ENCODE measurements at regions of chr12 and their contacts with region 1.

Region 1: DNA sequence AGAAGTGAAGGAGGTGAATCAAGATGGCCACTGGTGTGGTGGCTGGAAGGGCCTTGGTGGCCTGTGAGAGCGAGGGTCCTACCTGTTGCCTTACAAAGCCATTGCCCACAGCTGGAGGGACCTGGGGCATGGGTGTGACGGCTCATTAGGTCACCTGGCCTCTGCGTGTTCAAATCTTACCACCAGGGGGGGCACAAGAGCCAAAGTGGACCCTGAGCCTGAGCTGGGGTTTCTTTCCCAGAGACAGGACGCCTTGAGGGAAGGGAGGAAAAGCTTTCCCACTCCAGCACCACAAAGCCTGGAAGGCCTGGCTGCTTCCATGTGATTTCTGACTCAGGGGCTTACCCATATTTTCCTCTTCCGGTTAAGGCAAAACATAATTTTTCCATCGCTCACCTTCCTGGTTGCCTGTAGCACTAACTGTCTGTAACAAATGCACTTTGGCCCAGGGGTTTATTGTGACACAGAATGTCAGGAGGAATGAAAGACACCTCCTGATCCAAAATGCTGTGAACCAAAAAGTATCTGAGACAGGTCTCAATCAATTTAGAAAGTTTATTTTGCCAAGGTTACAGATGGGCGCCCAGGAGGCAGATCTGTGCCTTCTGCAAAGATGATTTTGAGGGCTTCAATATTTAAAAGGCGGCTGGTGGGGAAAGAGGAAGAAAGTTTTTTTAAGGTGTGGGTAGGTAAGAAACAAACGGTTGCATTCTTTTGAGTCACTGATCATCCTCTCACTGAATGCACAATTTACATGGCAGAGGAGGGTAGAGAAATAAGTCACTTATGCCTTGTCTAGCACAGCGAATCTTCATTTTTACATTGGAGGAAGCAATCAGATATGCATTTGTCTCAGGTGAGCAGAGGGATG is 4.3 kb upstream of the CD9 start:
- DNase-seq: peak; percentile 48 to 89 (median 82)
- H3K4me3 ChIP-seq: no peak overlapping the region
- H3K27ac ChIP-seq: peak overlapping the region in 47 of 59 donors; percentile 1 to 83 (median 52)
- H3K27me3 ChIP-seq: peaks cover 0 to 9% (median 0%) of the 10 kb centered on the region in 45 donors
- CTCF ChIP-seq: peak; percentile 91 to 98 (median 96)

Region 2: GRCh38 chr12:6062757-6063735 is 132.9 kb before region 1 on chr12:
- intact Hi-C with region 1: loop called in 1 of 2 experiments (anchors 5 kb)
- DNase-seq: peak in 8 of 10 donors; percentile 46 to 78 (median 62)
- H3K4me3 ChIP-seq: peak overlapping the region in 6 of 59 donors; percentile 7 to 41 (median 28)
- H3K27ac ChIP-seq: peak overlapping the region in 57 of 59 donors; percentile 2 to 90 (median 72)
- H3K27me3 ChIP-seq: no peaks in the 10 kb centered on the region
- CTCF ChIP-seq: peak; percentile 66 to 96 (median 90)

Region 3: GRCh38 chr12:6230321-6231110 is 34.6 kb after region 1 on chr12:
- intact Hi-C with region 1: loop called (anchors 1 to 2 kb)
- DNase-seq: peak; percentile 48 to 97 (median 90)
- H3K4me3 ChIP-seq: peak overlapping the region in 29 of 59 donors; percentile 1 to 44 (median 21)
- H3K27ac ChIP-seq: peak overlapping the region; percentile 74 to 100 (median 97)
- H3K27me3 ChIP-seq: no peaks in the 10 kb centered on the region
- CTCF ChIP-seq: peak in 9 of 56 donors; percentile 7 to 21 (median 13)

Region 4: GRCh38 chr12:6890789-6891645 is 695.1 kb after region 1 on chr12:
- intact Hi-C with region 1: no loop called
- DNase-seq: peak; percentile 96 to 99 (median 98)
- H3K4me3 ChIP-seq: peak overlapping the region; percentile 34 to 88 (median 65)
- H3K27ac ChIP-seq: peak overlapping the region; percentile 85 to 100 (median 97)
- H3K27me3 ChIP-seq: no peaks in the 10 kb centered on the region
- CTCF ChIP-seq: peak; percentile 84 to 99 (median 98)

Measured in dorsolateral prefrontal cortex (tissue), 120 donors.